Activated CD4-positive, alpha-beta memory T cell treated with anti-CD3 and anti-CD28 coated beads for 36 hours (primary cell): ENCODE measurements at regions of chr20 and their contacts with region 1.

Region 1: GRCh38 chr20:25390538-25391528 is at the start of gene ABHD12:
- DNase-seq: peak; percentile 97
- H3K4me3 Mint-ChIP-seq: peak within 1 kb of the TSS; percentile 88
- H3K27ac Mint-ChIP-seq: peak within 1 kb of the TSS; percentile 83
- H3K4me1 Mint-ChIP-seq: peaks cover 12% of the 10 kb centered on the region
- H3K27me3 Mint-ChIP-seq: no peaks in the 10 kb centered on the region
- total RNA-seq, gene ABHD12: 22.3 to 24.1 TPM

Region 2: DNA sequence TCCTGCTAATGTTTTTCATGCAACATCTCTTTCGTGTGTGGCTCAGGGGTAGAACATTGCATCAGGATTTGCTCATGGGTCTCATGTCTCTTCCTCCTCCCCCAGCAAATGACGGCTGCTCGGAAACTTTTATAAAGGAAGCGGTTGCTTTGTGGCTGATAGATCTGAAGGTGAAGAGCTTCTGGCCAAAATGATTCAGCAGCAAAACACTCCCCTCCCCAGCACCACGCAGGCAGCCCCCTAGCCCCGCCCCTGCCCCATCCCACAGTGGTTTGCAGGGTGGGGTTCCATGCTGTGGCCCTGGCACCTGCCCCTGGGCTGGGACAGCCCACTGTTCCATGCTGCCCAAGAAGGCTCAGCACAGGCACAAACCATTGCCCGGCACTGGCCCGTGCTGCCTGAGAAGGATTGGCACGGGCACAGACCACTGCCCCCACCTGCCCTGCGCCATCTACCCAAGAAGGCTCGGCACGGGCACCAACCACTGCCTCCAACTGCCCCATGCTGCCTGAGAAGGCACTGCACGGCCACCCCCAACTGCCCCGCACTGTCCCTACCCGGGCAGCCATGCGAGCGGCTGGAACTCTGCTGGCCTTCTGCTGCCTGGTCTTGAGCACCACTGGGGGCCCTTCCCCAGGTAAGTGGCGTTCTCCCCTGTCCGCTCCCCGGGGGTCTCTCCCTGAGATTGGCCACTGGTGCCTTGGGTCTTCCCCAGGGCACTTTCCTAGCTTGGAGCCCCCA is 441.7 kb before region 1 on chr20 and contains the start of gene CST7:
- CTCF ChIA-PET with region 1: no interaction called
- POLR2A ChIA-PET with region 1: no interaction called
- intact Hi-C with region 1: loop called (anchors 5 kb)
- DNase-seq: peak; percentile 93
- H3K4me3 Mint-ChIP-seq: peak within 1 kb of the TSS; percentile 83
- H3K27ac Mint-ChIP-seq: peak within 1 kb of the TSS; percentile 96
- H3K4me1 Mint-ChIP-seq: peaks cover 50% of the 10 kb centered on the region
- H3K27me3 Mint-ChIP-seq: no peaks in the 10 kb centered on the region
- total RNA-seq, gene CST7: 81.8 to 83.1 TPM

Region 3: GRCh38 chr20:25057234-25058050 is 333.4 kb before region 1 on chr20:
- CTCF ChIA-PET with region 1: no interaction called
- POLR2A ChIA-PET with region 1: no interaction called
- intact Hi-C with region 1: loop called (anchors 2 kb)
- DNase-seq: peak; percentile 87
- H3K4me3 Mint-ChIP-seq: peak overlapping the region; percentile 79
- H3K27ac Mint-ChIP-seq: peak overlapping the region; percentile 79
- H3K4me1 Mint-ChIP-seq: peaks cover 47% of the 10 kb centered on the region
- H3K27me3 Mint-ChIP-seq: no peaks in the 10 kb centered on the region

Region 4: GRCh38 chr20:25247956-25248785 is 142.7 kb before region 1 on chr20 and contains the start of gene PYGB:
- CTCF ChIA-PET with region 1: interaction called, 5 read pairs
- POLR2A ChIA-PET with region 1: no interaction called
- intact Hi-C with region 1: loop called (anchors 5 kb)
- DNase-seq: peak; percentile 81
- H3K4me3 Mint-ChIP-seq: peak within 1 kb of the TSS; percentile 91
- H3K27ac Mint-ChIP-seq: peak within 1 kb of the TSS; percentile 88
- H3K4me1 Mint-ChIP-seq: peaks cover 50% of the 10 kb centered on the region
- H3K27me3 Mint-ChIP-seq: no peaks in the 10 kb centered on the region
- total RNA-seq, gene PYGB: 23.4 to 24.0 TPM

Region 5: DNA sequence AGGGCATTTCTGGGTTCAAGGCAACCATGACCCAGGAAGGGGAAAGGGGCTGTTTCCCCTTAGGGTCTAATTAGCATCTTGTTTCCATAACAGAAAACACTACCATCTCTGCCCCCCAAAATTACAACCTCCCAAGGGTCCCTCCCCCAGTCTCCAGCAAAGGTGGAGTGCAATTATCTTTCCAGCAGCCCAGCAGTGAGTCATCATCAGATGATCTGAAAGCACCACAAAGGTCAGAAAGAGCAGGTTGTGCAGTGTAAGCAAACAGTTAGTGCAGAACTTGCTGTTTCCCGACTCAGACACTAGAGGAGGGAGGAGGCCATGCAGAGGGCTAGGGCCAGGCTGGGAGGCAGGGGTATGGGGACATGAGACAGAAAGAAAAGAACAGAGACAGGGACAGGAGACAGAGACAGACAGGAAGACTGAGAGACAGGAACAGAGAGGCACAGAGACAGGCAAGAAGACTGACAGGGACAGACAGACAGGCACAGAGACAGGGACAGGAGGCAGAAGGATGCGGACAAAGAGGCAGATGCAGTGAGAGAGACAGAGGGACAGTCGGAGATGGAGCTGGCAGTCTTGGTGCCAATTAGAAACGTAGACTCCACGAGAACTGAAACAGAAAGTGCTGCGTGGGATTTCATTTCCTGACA is 80.4 kb before region 1 on chr20:
- CTCF ChIA-PET with region 1: interaction called, 5 read pairs
- POLR2A ChIA-PET with region 1: no interaction called
- intact Hi-C with region 1: loop called (anchors 1 kb)
- DNase-seq: peak; percentile 79
- H3K4me3 Mint-ChIP-seq: peak overlapping the region; percentile 61
- H3K27ac Mint-ChIP-seq: peak overlapping the region; percentile 89
- H3K4me1 Mint-ChIP-seq: peaks cover 31% of the 10 kb centered on the region
- H3K27me3 Mint-ChIP-seq: no peaks in the 10 kb centered on the region

Region 6: DNA sequence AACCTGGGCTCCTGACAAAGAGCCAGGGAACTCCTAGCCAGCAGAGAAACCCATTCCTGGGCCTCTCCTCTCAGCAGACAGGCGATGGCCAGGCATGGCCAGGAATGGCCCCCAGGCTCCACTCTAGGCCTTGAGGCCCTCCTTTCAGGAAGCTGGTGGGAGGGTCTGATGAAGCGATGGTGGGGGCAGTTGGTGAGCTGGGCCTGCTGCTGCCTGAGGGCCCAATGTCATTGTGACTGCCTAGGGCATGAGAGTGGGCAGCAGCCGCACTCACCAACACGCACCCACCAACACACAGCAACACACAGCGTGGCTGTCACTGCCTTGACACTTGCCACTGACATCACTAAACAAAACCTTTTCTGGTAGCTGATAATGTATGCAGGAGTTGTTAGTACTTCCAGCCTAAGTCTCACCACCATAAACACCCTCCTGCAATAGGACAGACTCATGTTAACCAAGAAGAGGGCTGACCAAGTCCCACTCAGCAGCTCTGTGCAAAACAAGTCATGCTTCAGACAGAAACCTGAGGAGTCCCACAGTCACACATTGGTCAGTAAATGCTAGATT is 69.5 kb before region 1 on chr20:
- CTCF ChIA-PET with region 1: no interaction called
- POLR2A ChIA-PET with region 1: no interaction called
- intact Hi-C with region 1: no loop called
- DNase-seq: no peak
- H3K4me3 Mint-ChIP-seq: no peak overlapping the region
- H3K27ac Mint-ChIP-seq: no peak overlapping the region
- H3K4me1 Mint-ChIP-seq: no peaks in the 10 kb centered on the region
- H3K27me3 Mint-ChIP-seq: no peaks in the 10 kb centered on the region

Region 7: DNA sequence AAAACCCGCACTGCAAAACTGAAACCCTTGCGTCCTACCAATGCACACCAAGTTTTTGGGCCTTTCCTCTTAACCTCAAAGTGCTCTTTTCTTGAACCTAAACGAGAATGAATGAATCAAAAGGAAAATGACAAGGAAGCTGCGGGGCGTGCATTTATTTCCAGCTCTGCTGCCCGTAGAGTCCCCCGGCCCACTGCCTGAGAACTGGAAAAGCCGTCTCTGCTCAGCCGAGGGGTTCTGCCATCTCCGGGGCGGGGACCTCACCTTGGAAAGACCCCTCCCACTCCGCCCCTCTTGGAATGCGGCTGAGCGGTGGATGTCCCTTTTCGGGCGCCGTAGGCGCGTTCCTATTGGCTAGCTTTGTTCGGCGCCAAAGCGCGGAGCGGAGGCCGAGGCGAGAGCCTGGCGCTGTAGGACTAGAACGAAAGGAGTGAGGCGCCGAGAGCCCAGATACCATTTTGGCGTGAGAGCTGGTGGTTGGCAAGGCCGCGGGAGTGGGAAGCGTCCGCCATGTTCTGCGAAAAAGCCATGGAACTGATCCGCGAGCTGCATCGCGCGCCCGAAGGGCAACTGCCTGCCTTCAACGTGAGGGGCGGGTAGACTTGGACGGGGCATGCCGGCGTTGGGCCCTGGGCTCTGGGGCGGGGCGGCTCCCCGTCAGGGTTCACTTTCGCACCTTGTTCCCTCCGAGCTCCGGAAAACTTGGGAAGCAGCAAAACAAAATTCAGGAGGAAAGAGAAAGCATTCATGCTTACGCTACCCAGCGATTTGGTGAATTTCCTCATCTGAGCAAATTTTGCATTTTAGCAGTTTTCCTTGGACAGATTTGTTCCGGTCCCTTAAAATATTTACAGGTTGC is 16.7 kb after region 1 on chr20 and contains the start of gene GINS1:
- CTCF ChIA-PET with region 1: interaction called, 3 read pairs
- POLR2A ChIA-PET with region 1: interaction called, 14 read pairs
- intact Hi-C with region 1: loop called (anchors 1 kb)
- DNase-seq: peak; percentile 92
- H3K4me3 Mint-ChIP-seq: peak within 1 kb of the TSS; percentile 88
- H3K27ac Mint-ChIP-seq: peak within 1 kb of the TSS; percentile 85
- H3K4me1 Mint-ChIP-seq: peaks cover 17% of the 10 kb centered on the region
- H3K27me3 Mint-ChIP-seq: no peaks in the 10 kb centered on the region
- total RNA-seq, gene GINS1: 31.5 to 32.3 TPM

Region 8: GRCh38 chr20:25453035-25453810 is 62.4 kb after region 1 on chr20:
- CTCF ChIA-PET with region 1: no interaction called
- POLR2A ChIA-PET with region 1: no interaction called
- intact Hi-C with region 1: no loop called
- DNase-seq: no peak
- H3K4me3 Mint-ChIP-seq: no peak overlapping the region
- H3K27ac Mint-ChIP-seq: no peak overlapping the region
- H3K4me1 Mint-ChIP-seq: no peaks in the 10 kb centered on the region
- H3K27me3 Mint-ChIP-seq: no peaks in the 10 kb centered on the region

Region 9: GRCh38 chr20:25696384-25697131 is 305.7 kb after region 1 on chr20 and contains the start of gene ZNF337:
- CTCF ChIA-PET with region 1: no interaction called
- POLR2A ChIA-PET with region 1: no interaction called
- intact Hi-C with region 1: loop called (anchors 1 kb)
- DNase-seq: peak; percentile 97
- H3K4me3 Mint-ChIP-seq: peak within 1 kb of the TSS; percentile 89
- H3K27ac Mint-ChIP-seq: peak within 1 kb of the TSS; percentile 77
- H3K4me1 Mint-ChIP-seq: peaks cover 21% of the 10 kb centered on the region
- H3K27me3 Mint-ChIP-seq: no peaks in the 10 kb centered on the region
- total RNA-seq, gene ZNF337: 12.1 to 12.5 TPM